ENCODE measurements at regions of chrX and their contacts with region 1.

Region 1: GRCh38 chrX:56764153-56764974 is 35.3 kb downstream of the NBDY start:
- DNase-seq: peak; percentile 20 to 90 (median 72)
- H3K4me3 ChIP-seq: peak overlapping the region; percentile 45
- H3K4me3 Mint-ChIP-seq: peak overlapping the region; percentile 28 to 98 (median 94)
- H3K27ac ChIP-seq: no peak overlapping the region
- H3K27ac Mint-ChIP-seq: peak overlapping the region; percentile 83 to 98 (median 92)
- H3K4me1 ChIP-seq: peaks cover 41% of the 10 kb centered on the region
- H3K4me1 Mint-ChIP-seq: peaks cover 53 to 62% (median 54%) of the 10 kb centered on the region in 3 donors
- H3K27me3 ChIP-seq: no peaks in the 10 kb centered on the region
- H3K27me3 Mint-ChIP-seq: peaks cover 0 to 2% of the 10 kb centered on the region in 2 donors

Region 2: DNA sequence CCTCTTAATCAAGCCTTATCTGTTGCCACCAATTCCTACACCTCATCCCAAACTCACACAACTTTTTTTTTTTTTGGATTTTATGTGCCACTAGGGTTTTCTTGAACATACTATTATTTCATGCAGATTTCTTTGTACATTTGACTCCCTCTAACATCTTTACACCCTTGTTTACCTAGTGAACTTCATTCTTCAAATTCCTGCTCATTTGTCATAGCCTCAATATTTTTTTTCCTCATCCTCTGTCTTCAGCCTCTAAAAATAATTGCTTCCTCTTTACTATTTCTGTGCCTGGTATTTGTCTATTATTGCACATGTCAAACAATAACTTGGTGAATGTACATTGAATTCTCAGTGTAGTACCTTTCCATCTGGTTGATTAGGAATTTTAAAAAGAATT is 13.3 kb before region 1 on chrX:
- CTCF ChIA-PET with region 1: no interaction called
- POLR2A ChIA-PET with region 1: no interaction called
- DNase-seq: no peak
- H3K4me3 ChIP-seq: no peak overlapping the region
- H3K4me3 Mint-ChIP-seq: no peak overlapping the region
- H3K27ac ChIP-seq: no peak overlapping the region
- H3K27ac Mint-ChIP-seq: peak overlapping the region in 3 of 8 donors; percentile 0 to 45 (median 3)
- H3K4me1 ChIP-seq: peaks cover 5% of the 10 kb centered on the region
- H3K4me1 Mint-ChIP-seq: peaks cover 14 to 61% (median 35%) of the 10 kb centered on the region in 3 donors
- H3K27me3 ChIP-seq: no peaks in the 10 kb centered on the region
- H3K27me3 Mint-ChIP-seq: no peaks in the 10 kb centered on the region

Region 3: DNA sequence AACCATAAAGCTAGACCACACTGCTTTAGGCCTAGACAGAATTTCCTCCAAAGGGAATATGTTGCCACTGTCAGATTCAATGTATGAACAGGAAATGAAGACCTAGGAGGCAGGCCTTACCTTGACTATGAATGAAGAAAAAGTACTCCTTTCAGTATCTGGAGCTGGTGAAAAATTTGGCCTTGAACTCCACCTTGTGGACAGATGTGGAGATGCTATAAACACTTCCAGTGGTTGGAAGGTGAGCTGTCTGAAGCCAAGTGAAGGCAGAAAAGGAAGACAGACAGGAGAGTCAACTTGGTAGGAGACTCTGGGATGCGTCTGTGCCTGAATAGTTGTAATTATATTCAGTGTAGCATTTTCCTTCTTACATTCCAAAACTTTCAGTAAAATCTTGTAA is 213.8 kb after region 1 on chrX:
- CTCF ChIA-PET with region 1: interaction called, 16 read pairs
- POLR2A ChIA-PET with region 1: interaction called, 3 read pairs
- DNase-seq: peak in 3 of 5 donors; percentile 45 to 57 (median 55)
- H3K4me3 ChIP-seq: no peak overlapping the region
- H3K4me3 Mint-ChIP-seq: no peak overlapping the region
- H3K27ac ChIP-seq: no peak overlapping the region
- H3K27ac Mint-ChIP-seq: peak overlapping the region in 1 of 8 donors; percentile 43
- H3K4me1 ChIP-seq: no peaks in the 10 kb centered on the region
- H3K4me1 Mint-ChIP-seq: peaks cover 0 to 6% (median 4%) of the 10 kb centered on the region in 3 donors
- H3K27me3 ChIP-seq: no peaks in the 10 kb centered on the region
- H3K27me3 Mint-ChIP-seq: peaks cover 0 to 1% of the 10 kb centered on the region in 2 donors

Measured in CD8-positive, alpha-beta memory T cell (primary cell).